Activated B cell treated with CpG ODN at 0.5 μM for 24 hours (primary cell): ENCODE measurements at regions of chr13 and their contacts with region 1.

Region 1: DNA sequence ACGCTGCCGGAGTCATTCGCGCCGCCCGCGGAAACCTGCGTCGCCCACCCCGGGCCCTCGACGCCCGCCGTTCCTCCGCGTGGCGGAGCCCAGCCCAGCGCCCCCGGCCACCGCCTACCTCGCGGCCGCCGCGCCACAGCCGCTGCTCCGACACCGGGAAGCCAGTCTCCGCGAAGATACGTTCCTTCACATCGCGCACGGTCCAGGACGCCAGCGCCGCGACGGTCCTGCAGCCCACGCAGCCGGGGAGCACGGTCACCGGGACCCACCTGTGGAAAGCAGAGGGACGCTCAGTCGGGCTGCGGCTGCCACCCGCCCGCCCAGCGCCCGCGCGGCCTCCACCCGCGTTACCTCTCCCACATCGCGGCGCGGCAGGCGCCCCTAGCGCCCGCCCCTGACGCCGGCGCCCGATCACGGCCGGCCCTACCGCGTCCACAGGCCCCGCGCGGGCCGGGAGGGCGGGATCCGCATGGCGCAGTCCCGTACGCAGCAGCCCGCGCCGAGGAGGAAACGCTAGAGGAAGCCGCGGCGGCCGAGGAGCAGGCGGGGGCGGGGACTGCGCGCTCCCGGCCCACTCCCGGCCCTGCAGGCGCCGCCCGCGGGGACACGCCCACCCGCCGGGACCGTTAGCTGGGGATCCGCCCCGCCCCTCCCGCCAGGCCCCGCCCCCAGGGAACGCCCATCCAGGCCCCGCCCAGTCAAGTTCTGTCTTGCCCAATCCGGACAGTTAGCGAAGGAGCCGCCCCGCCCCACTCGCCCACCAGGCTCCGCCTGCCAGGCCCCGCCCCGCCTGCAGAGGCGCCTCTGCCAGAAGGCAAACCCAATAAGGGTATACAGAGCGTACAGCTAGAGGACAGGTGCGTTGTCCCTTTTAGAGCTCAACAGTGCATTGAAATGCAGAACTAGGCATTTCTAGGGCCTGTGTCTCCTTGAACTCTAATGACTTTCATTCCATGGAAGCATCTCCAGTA is 58.2 kb downstream of the SACS start:
- DNase-seq: peak; percentile 91
- ATAC-seq: peak; percentile 84
- H3K4me3 Mint-ChIP-seq: peak overlapping the region; percentile 78
- H3K27ac Mint-ChIP-seq: peak overlapping the region; percentile 77
- H3K4me1 Mint-ChIP-seq: peaks cover 66% of the 10 kb centered on the region
- H3K27me3 Mint-ChIP-seq: no peaks in the 10 kb centered on the region
- CTCF ChIP-seq: no peak

Region 2: DNA sequence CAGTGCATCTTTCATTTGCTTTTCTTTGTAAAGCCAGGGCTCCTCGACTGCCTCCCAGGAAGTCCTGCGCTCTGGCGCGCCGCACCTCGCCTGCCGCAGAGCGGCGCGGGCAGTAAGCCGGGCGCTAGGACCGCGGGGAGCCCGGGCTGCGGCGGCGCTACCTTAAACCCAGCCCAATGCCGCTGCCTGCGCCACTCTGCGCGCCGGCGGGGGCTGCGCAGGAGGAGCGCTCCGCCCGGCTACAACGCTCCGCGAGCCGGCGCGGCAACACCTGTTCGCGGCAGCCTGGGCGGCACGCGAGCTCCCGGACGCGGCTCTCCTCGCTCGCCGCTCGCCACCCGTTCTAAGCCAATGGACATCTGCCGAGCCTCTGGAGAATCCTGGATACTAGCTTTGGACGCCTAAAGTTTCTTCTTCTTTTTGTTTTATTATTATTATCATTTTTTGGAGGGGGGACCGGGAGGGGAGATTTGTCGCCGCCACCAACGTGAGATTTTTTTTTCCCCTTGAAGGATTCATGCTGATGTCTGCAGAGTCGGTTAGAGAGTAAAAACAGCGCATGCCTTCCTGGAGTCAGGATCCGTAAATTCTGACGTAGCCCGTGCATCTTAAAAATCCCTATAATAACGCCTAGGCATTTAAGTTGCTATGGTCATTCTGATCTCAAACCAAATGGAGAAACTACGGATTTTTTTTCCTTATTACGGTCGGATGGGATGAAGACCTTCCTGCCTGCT is 1704.2 kb before region 1 on chr13 and contains the start of gene FGF9:
- CTCF ChIA-PET with region 1: no interaction called
- POLR2A ChIA-PET with region 1: no interaction called
- intact Hi-C with region 1: loop called (anchors 2 kb)
- DNase-seq: peak; percentile 76
- ATAC-seq: peak; percentile 77
- H3K4me3 Mint-ChIP-seq: peak within 1 kb of the TSS; percentile 85
- H3K27ac Mint-ChIP-seq: peak within 1 kb of the TSS; percentile 61
- H3K4me1 Mint-ChIP-seq: peaks cover 48% of the 10 kb centered on the region
- H3K27me3 Mint-ChIP-seq: peaks cover 43% of the 10 kb centered on the region
- CTCF ChIP-seq: no peak
- total RNA-seq, gene FGF9: 0.22 and 0.49 TPM in 2 replicates

Region 3: DNA sequence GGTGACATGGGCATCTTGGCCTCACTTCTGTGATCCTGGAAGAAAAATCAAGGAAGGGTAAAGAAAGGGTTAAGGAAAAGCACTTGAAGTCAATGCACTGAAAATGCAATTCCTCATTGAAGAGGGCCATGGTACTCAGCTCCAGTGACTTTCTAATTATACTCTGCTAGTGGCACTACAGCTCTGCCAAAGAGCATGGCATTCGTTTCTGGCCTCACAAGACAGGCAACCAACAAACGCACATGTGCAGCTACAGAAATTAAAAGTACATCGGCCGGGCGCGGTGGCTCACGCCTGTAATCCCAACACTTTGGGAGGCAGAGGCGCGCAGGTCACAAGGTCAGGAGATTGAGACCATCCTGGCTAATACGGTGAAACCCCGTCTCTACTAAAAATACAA is 36.4 kb after region 1 on chr13:
- CTCF ChIA-PET with region 1: interaction called, 4 read pairs
- POLR2A ChIA-PET with region 1: no interaction called
- intact Hi-C with region 1: loop called (anchors 1 kb)
- DNase-seq: no peak
- ATAC-seq: no peak
- H3K4me3 Mint-ChIP-seq: no peak overlapping the region
- H3K27ac Mint-ChIP-seq: no peak overlapping the region
- H3K4me1 Mint-ChIP-seq: peaks cover 2% of the 10 kb centered on the region
- H3K27me3 Mint-ChIP-seq: peaks cover 9% of the 10 kb centered on the region
- CTCF ChIP-seq: no peak

Region 4: GRCh38 chr13:23579072-23579895 is 204.0 kb after region 1 on chr13:
- CTCF ChIA-PET with region 1: no interaction called
- POLR2A ChIA-PET with region 1: no interaction called
- intact Hi-C with region 1: loop called (anchors 1 kb)
- DNase-seq: peak; percentile 95
- ATAC-seq: peak; percentile 97
- H3K4me3 Mint-ChIP-seq: peak overlapping the region; percentile 79
- H3K27ac Mint-ChIP-seq: peak overlapping the region; percentile 41
- H3K4me1 Mint-ChIP-seq: peaks cover 11% of the 10 kb centered on the region
- H3K27me3 Mint-ChIP-seq: peaks cover 31% of the 10 kb centered on the region
- CTCF ChIP-seq: no peak

Region 5: GRCh38 chr13:23888658-23889614 is 513.6 kb after region 1 on chr13 and contains the start of gene MIPEP:
- CTCF ChIA-PET with region 1: no interaction called
- POLR2A ChIA-PET with region 1: no interaction called
- intact Hi-C with region 1: loop called (anchors 2 kb)
- DNase-seq: peak; percentile 84
- ATAC-seq: peak; percentile 93
- H3K4me3 Mint-ChIP-seq: peak within 1 kb of the TSS; percentile 91
- H3K27ac Mint-ChIP-seq: peak within 1 kb of the TSS; percentile 71
- H3K4me1 Mint-ChIP-seq: peaks cover 27% of the 10 kb centered on the region
- H3K27me3 Mint-ChIP-seq: no peaks in the 10 kb centered on the region
- CTCF ChIP-seq: no peak
- total RNA-seq, gene MIPEP: 19.7 and 19.9 TPM in 2 replicates

Region 6: DNA sequence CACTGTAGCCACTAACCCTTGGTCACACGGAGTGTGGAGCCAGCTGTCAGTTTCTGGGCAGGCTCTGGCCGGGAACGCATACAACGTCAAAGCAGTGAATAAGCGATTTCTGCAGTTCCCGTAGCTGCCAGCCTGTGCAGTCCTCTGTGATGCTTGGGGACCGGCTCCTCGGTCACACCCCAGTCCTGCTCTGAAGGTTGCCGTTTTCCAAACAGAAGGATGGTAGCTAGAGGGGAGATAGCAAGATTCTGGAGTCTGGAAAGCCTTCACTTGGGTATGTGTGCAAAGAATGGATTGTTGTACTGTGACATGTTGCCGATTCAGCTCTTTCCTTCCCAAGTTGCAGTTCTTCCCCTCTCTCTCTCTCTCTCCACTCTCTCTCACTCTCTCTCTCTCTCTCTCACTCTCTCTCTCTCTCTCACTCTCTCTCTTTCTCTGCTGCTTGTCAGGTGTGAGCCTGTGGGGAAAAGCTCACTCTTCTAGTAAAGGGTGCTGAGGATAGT is 895.4 kb after region 1 on chr13:
- CTCF ChIA-PET with region 1: no interaction called
- POLR2A ChIA-PET with region 1: interaction called, 3 read pairs
- intact Hi-C with region 1: loop called (anchors 1 kb)
- DNase-seq: no peak
- ATAC-seq: peak; percentile 55
- H3K4me3 Mint-ChIP-seq: peak overlapping the region; percentile 87
- H3K27ac Mint-ChIP-seq: peak overlapping the region; percentile 95
- H3K4me1 Mint-ChIP-seq: peaks cover 76% of the 10 kb centered on the region
- H3K27me3 Mint-ChIP-seq: no peaks in the 10 kb centered on the region
- CTCF ChIP-seq: no peak

Region 7: DNA sequence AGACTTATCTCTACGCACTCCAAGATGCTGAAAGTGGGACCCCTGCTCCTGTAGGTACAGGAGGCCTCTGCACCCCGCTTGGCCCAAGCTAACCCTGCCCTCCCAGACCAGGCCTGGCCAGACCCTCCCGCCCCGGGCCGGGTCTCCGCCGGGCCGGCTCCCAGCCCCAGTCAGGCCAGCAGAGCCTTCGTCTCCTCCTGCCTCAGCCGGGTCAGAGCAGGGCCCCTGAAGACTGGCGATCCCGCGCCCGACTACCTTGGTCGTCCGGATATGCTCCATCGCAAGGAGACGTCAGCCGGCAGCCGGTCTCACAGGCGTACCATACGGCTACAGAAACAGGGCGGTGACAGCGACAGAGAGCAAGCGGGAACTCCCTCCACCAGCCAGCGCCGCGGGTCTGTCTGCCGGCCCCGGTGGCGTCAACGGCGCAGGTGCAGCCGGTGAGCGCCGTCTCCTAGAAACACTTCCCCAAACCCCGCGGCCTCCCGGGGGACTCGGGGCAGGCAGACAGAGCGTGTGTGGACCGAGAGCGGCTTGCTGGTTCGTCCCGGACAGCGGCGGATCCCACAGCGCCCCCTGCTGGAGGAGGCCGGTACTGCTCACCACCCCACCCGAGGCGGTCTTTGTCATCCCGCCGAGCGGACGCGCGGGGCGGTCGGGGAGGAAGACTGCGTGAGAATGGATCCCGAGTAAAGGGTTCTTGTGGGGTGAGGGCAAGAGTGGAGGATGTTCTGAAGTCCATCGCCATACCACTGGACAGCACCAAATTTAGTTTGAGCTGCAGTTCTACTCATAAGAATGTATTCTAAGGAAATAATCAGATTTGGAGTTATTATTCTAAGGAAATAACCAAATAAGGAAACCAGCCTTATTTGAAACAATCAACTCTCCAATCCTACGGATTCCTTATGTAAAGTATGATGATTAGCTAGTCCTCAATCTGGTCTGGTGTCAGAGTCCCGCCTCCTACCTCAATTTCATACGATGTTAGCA is 1912.0 kb after region 1 on chr13 and contains the start of gene MTMR6:
- CTCF ChIA-PET with region 1: no interaction called
- POLR2A ChIA-PET with region 1: no interaction called
- intact Hi-C with region 1: loop called (anchors 5 kb)
- DNase-seq: peak; percentile 99
- ATAC-seq: peak; percentile 87
- H3K4me3 Mint-ChIP-seq: peak within 1 kb of the TSS; percentile 91
- H3K27ac Mint-ChIP-seq: peak within 1 kb of the TSS; percentile 95
- H3K4me1 Mint-ChIP-seq: peaks cover 40% of the 10 kb centered on the region
- H3K27me3 Mint-ChIP-seq: peaks cover 13% of the 10 kb centered on the region
- CTCF ChIP-seq: peak; percentile 95
- total RNA-seq, gene MTMR6: 18.3 and 19.8 TPM in 2 replicates